ENCODE measurements at regions of chr4 and their contacts with region 1.

Region 1: DNA sequence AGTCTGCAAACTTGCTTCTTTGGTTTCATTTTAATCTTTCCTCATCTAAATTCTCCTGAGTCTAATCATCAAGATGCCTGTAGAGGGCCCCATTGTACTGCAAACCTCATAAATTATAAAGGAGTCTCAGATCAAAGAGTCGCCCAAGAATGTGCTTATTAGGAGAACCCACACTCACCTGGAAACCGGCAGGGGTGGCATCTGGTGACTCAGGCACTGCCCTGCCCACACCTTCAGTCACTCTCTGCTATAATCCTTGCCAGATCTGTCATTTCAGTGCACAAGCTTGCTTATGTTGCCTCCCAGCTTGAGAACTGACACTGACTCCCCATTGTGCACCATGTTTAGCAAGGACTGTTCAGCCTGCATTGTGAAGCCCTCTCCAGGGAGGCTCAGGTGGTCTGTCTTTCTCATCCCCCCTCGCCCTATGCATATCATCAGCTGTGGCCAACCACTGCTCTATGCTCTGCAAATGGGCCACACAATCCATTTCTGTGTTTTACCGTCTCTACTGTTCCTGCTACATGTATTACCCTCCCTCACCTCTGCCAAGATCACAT is 12.4 kb downstream of the EPGN start:
- H3K4me3 Mint-ChIP-seq: no peak overlapping the region
- H3K27ac Mint-ChIP-seq: no peak overlapping the region
- H3K4me1 Mint-ChIP-seq: peaks cover 21% of the 10 kb centered on the region
- H3K27me3 Mint-ChIP-seq: no peaks in the 10 kb centered on the region

Region 2: GRCh38 chr4:74038161-74039064 is 282.2 kb before region 1 on chr4 and contains the start of gene CXCL3:
- intact Hi-C with region 1: no loop called
- H3K4me3 Mint-ChIP-seq: peak within 1 kb of the TSS; percentile 82
- H3K27ac Mint-ChIP-seq: peak within 1 kb of the TSS; percentile 86
- H3K4me1 Mint-ChIP-seq: peaks cover 41% of the 10 kb centered on the region
- H3K27me3 Mint-ChIP-seq: peaks cover 29% of the 10 kb centered on the region

Region 3: GRCh38 chr4:74370912-74371311 is 50.3 kb after region 1 on chr4:
- intact Hi-C with region 1: loop called (anchors 2 kb)
- H3K4me3 Mint-ChIP-seq: no peak overlapping the region
- H3K27ac Mint-ChIP-seq: no peak overlapping the region
- H3K4me1 Mint-ChIP-seq: peaks cover 48% of the 10 kb centered on the region
- H3K27me3 Mint-ChIP-seq: no peaks in the 10 kb centered on the region

Region 4: GRCh38 chr4:74418063-74418670 is 97.5 kb after region 1 on chr4:
- intact Hi-C with region 1: no loop called
- H3K4me3 Mint-ChIP-seq: no peak overlapping the region
- H3K27ac Mint-ChIP-seq: no peak overlapping the region
- H3K4me1 Mint-ChIP-seq: peaks cover 11% of the 10 kb centered on the region
- H3K27me3 Mint-ChIP-seq: no peaks in the 10 kb centered on the region

Region 5: DNA sequence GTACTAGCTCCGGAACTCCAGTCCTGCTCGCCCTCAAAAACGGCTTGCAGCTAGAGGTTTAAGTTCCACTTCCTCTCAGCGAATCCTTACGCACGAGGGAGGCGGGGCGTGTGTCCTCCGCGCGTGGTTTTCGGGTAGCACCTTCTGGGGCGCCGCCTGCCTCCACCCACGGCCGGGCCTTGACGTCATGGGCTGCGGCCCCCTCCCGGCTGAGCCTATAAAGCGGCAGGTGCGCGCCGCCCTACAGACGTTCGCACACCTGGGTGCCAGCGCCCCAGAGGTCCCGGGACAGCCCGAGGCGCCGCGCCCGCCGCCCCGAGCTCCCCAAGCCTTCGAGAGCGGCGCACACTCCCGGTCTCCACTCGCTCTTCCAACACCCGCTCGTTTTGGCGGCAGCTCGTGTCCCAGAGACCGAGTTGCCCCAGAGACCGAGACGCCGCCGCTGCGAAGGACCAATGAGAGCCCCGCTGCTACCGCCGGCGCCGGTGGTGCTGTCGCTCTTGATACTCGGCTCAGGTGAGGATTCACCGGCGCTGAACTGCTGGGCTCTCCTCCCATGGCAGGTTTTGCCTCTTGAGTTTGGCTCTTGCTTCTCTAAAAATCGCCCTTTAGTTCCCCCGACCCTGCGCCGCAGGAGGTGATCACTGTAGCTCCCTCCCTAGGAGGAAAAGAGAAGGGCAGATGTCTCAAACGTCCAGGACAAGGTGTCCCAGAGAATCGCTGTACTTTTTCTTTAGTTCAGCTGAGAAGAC is 124.4 kb after region 1 on chr4 and contains the start of gene AREG:
- intact Hi-C with region 1: loop called (anchors 5 kb)
- H3K4me3 Mint-ChIP-seq: peak within 1 kb of the TSS; percentile 92
- H3K27ac Mint-ChIP-seq: peak within 1 kb of the TSS; percentile 85
- H3K4me1 Mint-ChIP-seq: peaks cover 5% of the 10 kb centered on the region
- H3K27me3 Mint-ChIP-seq: peaks cover 3% of the 10 kb centered on the region

Region 6: GRCh38 chr4:74531963-74532794 is 211.5 kb after region 1 on chr4:
- intact Hi-C with region 1: loop called (anchors 1 kb)
- H3K4me3 Mint-ChIP-seq: no peak overlapping the region
- H3K27ac Mint-ChIP-seq: no peak overlapping the region
- H3K4me1 Mint-ChIP-seq: peaks cover under 1% of the 10 kb centered on the region
- H3K27me3 Mint-ChIP-seq: no peaks in the 10 kb centered on the region

Region 7: GRCh38 chr4:74623041-74623440 is 302.4 kb after region 1 on chr4:
- intact Hi-C with region 1: loop called (anchors 5 kb)
- H3K4me3 Mint-ChIP-seq: no peak overlapping the region
- H3K27ac Mint-ChIP-seq: no peak overlapping the region
- H3K4me1 Mint-ChIP-seq: peaks cover 15% of the 10 kb centered on the region
- H3K27me3 Mint-ChIP-seq: peaks cover 2% of the 10 kb centered on the region

Region 8: GRCh38 chr4:74675673-74676279 is 355.1 kb after region 1 on chr4:
- intact Hi-C with region 1: loop called (anchors 1 kb)
- H3K4me3 Mint-ChIP-seq: no peak overlapping the region
- H3K27ac Mint-ChIP-seq: no peak overlapping the region
- H3K4me1 Mint-ChIP-seq: peaks cover 6% of the 10 kb centered on the region
- H3K27me3 Mint-ChIP-seq: no peaks in the 10 kb centered on the region